ENCODE measurements at regions of chr1 and their contacts with region 1.

Region 1: GRCh38 chr1:23496490-23497181 is 12.7 kb upstream of the ASAP3 start:
- DNase-seq: no peak
- ATAC-seq: no peak
- H3K4me3 ChIP-seq: no peak overlapping the region
- H3K4me3 Mint-ChIP-seq: no peak overlapping the region
- H3K27ac ChIP-seq: no peak overlapping the region
- H3K27ac Mint-ChIP-seq: no peak overlapping the region
- H3K4me1 ChIP-seq: peaks cover 3 to 13% of the 10 kb centered on the region in 2 donors
- H3K4me1 Mint-ChIP-seq: peaks cover 17% of the 10 kb centered on the region
- H3K27me3 ChIP-seq: peaks cover 0 to 3% (median 0%) of the 10 kb centered on the region in 4 experiments
- H3K27me3 Mint-ChIP-seq: peaks cover 1% of the 10 kb centered on the region
- CTCF ChIP-seq: no peak

Region 2: GRCh38 chr1:23507507-23507906 is 10.9 kb after region 1 on chr1:
- CTCF ChIA-PET with region 1: interaction called, 62 read pairs
- POLR2A ChIA-PET with region 1: no interaction called
- intact Hi-C with region 1: no loop called
- DNase-seq: no peak
- ATAC-seq: no peak
- H3K4me3 ChIP-seq: no peak overlapping the region
- H3K4me3 Mint-ChIP-seq: no peak overlapping the region
- H3K27ac ChIP-seq: no peak overlapping the region
- H3K27ac Mint-ChIP-seq: no peak overlapping the region
- H3K4me1 ChIP-seq: no peaks in the 10 kb centered on the region
- H3K4me1 Mint-ChIP-seq: no peaks in the 10 kb centered on the region
- H3K27me3 ChIP-seq: no peaks in the 10 kb centered on the region
- H3K27me3 Mint-ChIP-seq: no peaks in the 10 kb centered on the region
- CTCF ChIP-seq: no peak

Region 3: GRCh38 chr1:23524716-23525401 is 28.2 kb after region 1 on chr1:
- CTCF ChIA-PET with region 1: interaction called, 332 read pairs
- POLR2A ChIA-PET with region 1: interaction called, 10 read pairs
- intact Hi-C with region 1: no loop called
- DNase-seq: peak; percentile 61
- ATAC-seq: peak; percentile 63
- H3K4me3 ChIP-seq: peak overlapping the region in 4 of 5 experiments; percentile 11 to 44 (median 22)
- H3K4me3 Mint-ChIP-seq: peak overlapping the region; percentile 72
- H3K27ac ChIP-seq: peak overlapping the region; percentile 76 to 83
- H3K27ac Mint-ChIP-seq: peak overlapping the region; percentile 90
- H3K4me1 ChIP-seq: peaks cover 72 to 83% of the 10 kb centered on the region in 2 donors
- H3K4me1 Mint-ChIP-seq: peaks cover 81% of the 10 kb centered on the region
- H3K27me3 ChIP-seq: peaks cover 0 to 3% (median 0%) of the 10 kb centered on the region in 4 experiments
- H3K27me3 Mint-ChIP-seq: no peaks in the 10 kb centered on the region
- CTCF ChIP-seq: no peak

Region 4: GRCh38 chr1:23657659-23658275 is 161.1 kb after region 1 on chr1:
- CTCF ChIA-PET with region 1: interaction called, 12 read pairs
- POLR2A ChIA-PET with region 1: interaction called, 3 read pairs
- intact Hi-C with region 1: no loop called
- DNase-seq: peak; percentile 47
- ATAC-seq: no peak
- H3K4me3 ChIP-seq: no peak overlapping the region
- H3K4me3 Mint-ChIP-seq: no peak overlapping the region
- H3K27ac ChIP-seq: no peak overlapping the region
- H3K27ac Mint-ChIP-seq: no peak overlapping the region
- H3K4me1 ChIP-seq: no peaks in the 10 kb centered on the region
- H3K4me1 Mint-ChIP-seq: no peaks in the 10 kb centered on the region
- H3K27me3 ChIP-seq: peaks cover 0 to 3% (median 0%) of the 10 kb centered on the region in 4 experiments
- H3K27me3 Mint-ChIP-seq: peaks cover 4% of the 10 kb centered on the region
- CTCF ChIP-seq: peak; percentile 76

Region 5: DNA sequence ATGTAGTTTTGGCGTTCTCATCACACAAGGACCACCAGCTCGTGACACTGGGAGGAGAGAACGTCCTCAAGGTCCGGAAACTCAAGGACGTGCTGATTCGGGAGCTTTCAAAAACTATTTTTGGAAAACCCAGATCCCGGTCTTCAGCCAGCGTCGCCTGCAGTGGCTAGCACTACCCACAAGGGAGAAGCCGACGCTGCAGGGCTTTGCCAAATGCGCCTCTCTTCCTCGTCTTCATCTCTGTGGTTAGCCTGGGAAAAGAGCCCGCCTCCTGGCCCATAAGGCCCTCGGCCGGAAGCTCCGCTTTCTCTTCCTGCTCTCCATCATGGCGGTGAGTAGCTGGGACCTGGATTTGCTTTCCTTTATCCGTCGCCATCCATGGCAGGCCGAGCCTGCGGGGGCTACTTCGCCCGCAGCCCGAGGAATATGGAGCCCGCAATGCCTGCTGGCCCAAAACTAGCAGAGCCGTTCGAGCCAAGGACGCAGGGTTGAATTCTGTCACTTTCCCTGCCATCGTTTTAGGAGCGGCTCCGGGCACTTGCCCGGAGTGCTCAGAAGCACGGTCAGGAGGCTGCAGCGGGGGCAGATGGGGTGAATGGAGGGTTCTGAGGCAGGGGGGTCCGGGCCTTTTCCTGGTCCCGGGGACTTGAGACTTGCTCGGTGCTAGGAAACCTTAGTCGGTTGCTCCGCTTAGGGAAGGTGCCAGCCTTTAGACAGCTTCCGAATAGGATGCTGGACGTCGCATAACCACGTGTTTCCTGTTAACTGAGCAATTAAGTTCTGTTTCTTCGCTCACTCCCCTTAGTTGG is 195.1 kb after region 1 on chr1 and contains the start of gene RPL11:
- CTCF ChIA-PET with region 1: interaction called, 10 read pairs
- POLR2A ChIA-PET with region 1: no interaction called
- intact Hi-C with region 1: no loop called
- DNase-seq: peak; percentile 92
- ATAC-seq: peak; percentile 100
- H3K4me3 ChIP-seq: peak within 1 kb of the TSS; percentile 76 to 99 (median 77)
- H3K4me3 Mint-ChIP-seq: peak within 1 kb of the TSS; percentile 97
- H3K27ac ChIP-seq: peak within 1 kb of the TSS; percentile 79 to 84
- H3K27ac Mint-ChIP-seq: peak within 1 kb of the TSS; percentile 94
- H3K4me1 ChIP-seq: peaks cover 16 to 22% of the 10 kb centered on the region in 2 donors
- H3K4me1 Mint-ChIP-seq: peaks cover 48% of the 10 kb centered on the region
- H3K27me3 ChIP-seq: no peaks in the 10 kb centered on the region
- H3K27me3 Mint-ChIP-seq: no peaks in the 10 kb centered on the region
- CTCF ChIP-seq: peak; percentile 79
- total RNA-seq, gene RPL11: 1,439 and 1,539 TPM in 2 replicates